Dendritic cell treated with granulocyte-macrophage colony-stimulating factor and Interleukin-4, amounts not matched to agents 40 ng/mL and 50 ng/mL, for 4 days (primary cell): ENCODE measurements at regions of chr17 and their contacts with region 1.

Region 1: GRCh38 chr17:39621523-39622379 is 5.0 kb upstream of the PPP1R1B start:
- H3K4me3 Mint-ChIP-seq: no peak overlapping the region
- H3K27ac Mint-ChIP-seq: no peak overlapping the region
- H3K4me1 Mint-ChIP-seq: peaks cover 32% of the 10 kb centered on the region
- H3K27me3 Mint-ChIP-seq: peaks cover 80% of the 10 kb centered on the region

Region 2: GRCh38 chr17:39527220-39527813 is 94.4 kb before region 1 on chr17:
- intact Hi-C with region 1: loop called (anchors 5 kb)
- H3K4me3 Mint-ChIP-seq: no peak overlapping the region
- H3K27ac Mint-ChIP-seq: no peak overlapping the region
- H3K4me1 Mint-ChIP-seq: peaks cover 17% of the 10 kb centered on the region
- H3K27me3 Mint-ChIP-seq: no peaks in the 10 kb centered on the region

Region 3: DNA sequence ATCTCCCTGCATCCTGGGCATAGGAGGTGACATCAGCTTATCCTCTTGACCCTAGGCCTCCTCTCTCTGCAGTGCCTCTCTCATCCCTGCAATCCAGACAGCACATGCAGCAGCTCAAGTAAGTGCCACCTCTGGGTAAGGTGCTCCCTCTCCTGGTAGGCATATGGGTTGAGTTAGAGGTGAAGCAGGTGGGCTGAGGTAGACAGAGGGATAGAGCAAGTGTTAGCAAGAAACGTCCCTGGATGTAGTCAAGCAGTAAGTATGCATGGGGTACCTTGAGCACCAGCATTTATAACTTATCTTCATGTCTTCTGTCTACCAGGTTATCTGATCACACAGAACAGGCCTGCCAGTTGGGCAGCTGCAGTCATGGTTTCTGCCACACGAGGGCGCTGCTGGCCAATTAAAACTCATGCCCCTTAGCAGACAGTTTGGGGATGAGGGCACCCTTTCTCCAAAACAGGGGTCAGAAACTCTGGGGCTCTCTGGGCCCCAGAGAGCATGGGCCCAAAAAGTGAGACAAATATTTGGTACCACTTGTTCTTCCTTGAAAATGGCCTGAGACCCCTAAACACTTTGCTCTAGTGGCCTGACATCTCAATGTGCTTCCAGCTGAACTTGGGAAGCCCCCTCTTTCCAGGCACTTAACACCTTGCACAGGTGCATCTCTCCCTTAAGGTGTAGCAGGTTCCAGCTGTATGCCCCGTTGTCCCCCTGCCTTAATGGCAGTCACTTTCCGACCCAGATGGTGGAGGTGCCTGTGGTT is 73.9 kb before region 1 on chr17:
- intact Hi-C with region 1: loop called (anchors 1 kb)
- H3K4me3 Mint-ChIP-seq: no peak overlapping the region
- H3K27ac Mint-ChIP-seq: no peak overlapping the region
- H3K4me1 Mint-ChIP-seq: peaks cover 32% of the 10 kb centered on the region
- H3K27me3 Mint-ChIP-seq: no peaks in the 10 kb centered on the region

Region 4: DNA sequence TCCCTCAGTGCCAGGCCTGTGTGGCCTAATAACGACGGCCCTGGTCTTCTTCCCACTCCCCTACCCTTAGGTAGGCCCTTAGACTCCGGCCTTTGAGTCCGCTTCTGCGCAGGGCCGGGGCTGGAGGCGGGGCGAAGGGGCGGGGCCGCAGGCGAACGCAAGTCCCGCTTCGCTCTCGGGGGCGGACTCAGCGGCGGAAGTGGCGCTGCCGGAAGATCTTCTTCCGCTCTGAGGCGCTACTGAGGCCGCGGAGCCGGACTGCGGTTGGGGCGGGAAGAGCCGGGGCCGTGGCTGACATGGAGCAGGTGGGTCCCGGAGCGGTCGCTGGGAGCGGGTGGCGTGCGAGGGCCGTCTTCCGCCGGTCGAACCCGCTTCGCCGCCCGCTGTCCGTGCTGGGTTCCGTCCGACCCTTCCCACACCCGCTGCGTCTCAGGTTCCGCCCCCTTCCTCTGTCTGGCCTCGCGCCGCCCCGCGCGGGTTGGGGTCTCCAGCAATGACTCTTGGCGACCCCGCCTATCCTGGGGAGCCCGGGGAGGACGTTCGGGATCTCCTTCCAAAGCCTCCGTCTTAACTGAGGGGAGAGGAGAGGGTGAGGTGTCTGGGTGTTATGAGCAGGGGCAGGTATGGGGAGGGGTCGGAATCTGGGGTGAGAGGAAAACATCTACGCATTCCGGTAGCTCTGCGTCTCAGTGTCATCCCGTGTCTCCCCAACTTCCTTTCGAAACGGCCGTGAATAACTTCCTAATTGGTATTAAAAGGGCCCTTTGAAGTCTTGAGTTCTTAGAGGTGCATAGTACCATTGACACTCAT is 15.4 kb after region 1 on chr17 and contains the start of gene STARD3:
- intact Hi-C with region 1: loop called (anchors 2 kb)
- H3K4me3 Mint-ChIP-seq: peak within 1 kb of the TSS; percentile 94
- H3K27ac Mint-ChIP-seq: peak within 1 kb of the TSS; percentile 79
- H3K4me1 Mint-ChIP-seq: peaks cover 85% of the 10 kb centered on the region
- H3K27me3 Mint-ChIP-seq: peaks cover 8% of the 10 kb centered on the region

Region 5: DNA sequence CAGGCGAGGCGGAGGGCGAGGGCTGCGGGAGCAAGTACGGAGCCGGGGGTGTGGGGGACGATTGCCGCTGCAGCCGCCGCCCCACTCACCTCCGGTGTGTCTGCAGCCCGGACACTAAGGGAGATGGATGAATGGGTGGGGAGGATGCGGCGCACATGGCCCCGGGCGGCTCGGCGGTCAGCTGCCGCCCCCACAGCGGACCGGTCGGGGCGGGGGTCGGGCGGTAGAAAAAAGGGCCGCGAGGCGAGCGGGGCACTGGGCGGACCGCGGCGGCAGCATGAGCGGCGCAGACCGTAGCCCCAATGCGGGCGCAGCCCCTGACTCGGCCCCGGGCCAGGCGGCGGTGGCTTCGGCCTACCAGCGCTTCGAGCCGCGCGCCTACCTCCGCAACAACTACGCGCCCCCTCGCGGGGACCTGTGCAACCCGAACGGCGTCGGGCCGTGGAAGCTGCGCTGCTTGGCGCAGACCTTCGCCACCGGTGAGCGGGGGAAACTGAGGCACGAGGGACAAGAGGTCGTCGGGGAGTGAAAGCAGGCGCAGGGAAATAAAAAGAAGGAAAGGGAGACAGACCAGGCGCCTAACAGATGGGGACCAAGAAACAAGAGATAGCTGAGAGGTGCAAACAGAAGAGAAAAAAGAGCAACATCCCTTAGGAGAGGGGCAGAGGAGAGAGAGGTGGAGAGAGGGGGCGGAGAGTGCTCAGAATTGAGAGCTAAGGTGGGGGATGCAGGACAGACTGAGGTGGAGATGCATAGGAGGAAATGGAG is 46.6 kb after region 1 on chr17 and contains the start of gene PNMT:
- intact Hi-C with region 1: loop called (anchors 1 kb)
- H3K4me3 Mint-ChIP-seq: peak within 1 kb of the TSS; percentile 8
- H3K27ac Mint-ChIP-seq: no peak within 1 kb of the TSS
- H3K4me1 Mint-ChIP-seq: peaks cover 37% of the 10 kb centered on the region
- H3K27me3 Mint-ChIP-seq: peaks cover 89% of the 10 kb centered on the region

Region 6: GRCh38 chr17:39730095-39730921 is 108.6 kb after region 1 on chr17 and contains the start of gene MIEN1:
- intact Hi-C with region 1: no loop called
- H3K4me3 Mint-ChIP-seq: peak within 1 kb of the TSS; percentile 83
- H3K27ac Mint-ChIP-seq: peak within 1 kb of the TSS; percentile 81
- H3K4me1 Mint-ChIP-seq: peaks cover 24% of the 10 kb centered on the region
- H3K27me3 Mint-ChIP-seq: peaks cover 19% of the 10 kb centered on the region

Region 7: DNA sequence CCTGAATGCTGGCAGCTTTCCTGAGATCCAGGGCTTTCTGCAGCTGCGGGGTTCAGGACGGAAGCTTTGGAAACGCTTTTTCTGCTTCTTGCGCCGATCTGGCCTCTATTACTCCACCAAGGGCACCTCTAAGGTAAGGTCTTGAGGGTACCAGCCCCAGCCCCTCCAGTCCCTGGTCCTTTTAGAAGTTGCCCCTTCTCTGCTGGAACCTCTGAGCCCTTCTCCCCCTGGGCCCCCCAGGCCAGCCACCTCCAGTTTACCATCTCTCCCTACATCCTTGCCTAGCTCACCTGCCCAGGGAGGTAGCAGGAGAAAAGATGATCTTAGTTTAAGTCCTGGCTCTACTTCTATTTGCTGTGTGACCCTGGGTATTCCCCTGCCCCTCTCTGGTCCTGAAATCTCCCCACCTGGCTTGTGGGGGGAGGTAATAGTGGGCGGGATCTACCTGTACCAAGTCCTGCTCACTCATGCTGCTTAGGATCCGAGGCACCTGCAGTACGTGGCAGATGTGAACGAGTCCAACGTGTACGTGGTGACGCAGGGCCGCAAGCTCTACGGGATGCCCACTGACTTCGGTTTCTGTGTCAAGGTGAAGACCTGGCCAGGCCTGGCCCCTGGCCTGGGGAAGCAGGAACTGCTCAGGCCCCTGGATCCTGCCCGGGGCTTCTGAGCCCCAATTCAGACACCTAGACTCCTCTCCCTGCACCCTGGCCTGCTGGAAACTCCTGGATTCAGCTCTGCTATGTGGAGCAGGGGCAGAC is 122.5 kb after region 1 on chr17:
- intact Hi-C with region 1: no loop called
- H3K4me3 Mint-ChIP-seq: no peak overlapping the region
- H3K27ac Mint-ChIP-seq: no peak overlapping the region
- H3K4me1 Mint-ChIP-seq: peaks cover 10% of the 10 kb centered on the region
- H3K27me3 Mint-ChIP-seq: peaks cover 67% of the 10 kb centered on the region

Region 8: DNA sequence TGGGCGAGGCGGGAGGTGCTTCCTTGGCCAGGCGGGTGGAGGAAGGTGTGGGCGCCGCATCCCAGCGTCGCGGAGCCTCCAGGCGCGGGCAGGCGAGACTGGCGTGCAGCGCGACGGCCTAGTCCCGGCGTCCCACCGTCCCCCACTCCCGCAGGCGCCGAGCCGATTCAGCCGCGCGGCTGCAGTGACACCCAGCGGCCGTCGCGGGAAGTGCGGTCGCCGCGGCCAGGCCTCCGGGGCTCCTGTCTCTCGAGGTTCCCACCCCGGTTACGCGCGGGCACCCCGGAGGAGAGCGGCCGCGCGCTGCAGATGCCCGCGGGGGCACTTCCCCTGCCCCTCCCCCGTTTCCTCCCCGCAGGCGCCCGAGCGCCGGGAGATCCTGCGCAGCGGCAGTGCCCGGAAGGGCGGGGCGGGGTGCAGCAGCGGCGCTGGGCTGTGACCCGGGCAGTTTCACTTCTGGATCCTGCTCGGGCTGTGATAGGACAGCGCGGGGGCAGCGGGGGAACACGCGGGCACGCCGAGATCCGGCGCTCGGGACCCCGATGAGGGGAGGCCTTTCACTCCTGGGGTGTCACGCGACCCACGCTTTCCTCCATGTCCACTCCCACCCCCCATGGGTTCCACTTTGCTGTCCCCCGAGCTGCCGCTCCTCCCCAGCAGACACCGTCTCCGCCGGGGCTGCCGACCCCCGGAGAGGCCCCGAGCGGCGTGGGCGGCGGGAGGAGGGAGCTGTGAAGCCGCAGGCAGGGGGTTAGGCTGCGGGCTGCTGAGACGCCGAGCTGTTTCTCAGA is 132.6 kb after region 1 on chr17:
- intact Hi-C with region 1: loop called (anchors 1 kb)
- H3K4me3 Mint-ChIP-seq: peak overlapping the region; percentile 71
- H3K27ac Mint-ChIP-seq: peak overlapping the region; percentile 90
- H3K4me1 Mint-ChIP-seq: peaks cover 55% of the 10 kb centered on the region
- H3K27me3 Mint-ChIP-seq: peaks cover 16% of the 10 kb centered on the region

Region 9: DNA sequence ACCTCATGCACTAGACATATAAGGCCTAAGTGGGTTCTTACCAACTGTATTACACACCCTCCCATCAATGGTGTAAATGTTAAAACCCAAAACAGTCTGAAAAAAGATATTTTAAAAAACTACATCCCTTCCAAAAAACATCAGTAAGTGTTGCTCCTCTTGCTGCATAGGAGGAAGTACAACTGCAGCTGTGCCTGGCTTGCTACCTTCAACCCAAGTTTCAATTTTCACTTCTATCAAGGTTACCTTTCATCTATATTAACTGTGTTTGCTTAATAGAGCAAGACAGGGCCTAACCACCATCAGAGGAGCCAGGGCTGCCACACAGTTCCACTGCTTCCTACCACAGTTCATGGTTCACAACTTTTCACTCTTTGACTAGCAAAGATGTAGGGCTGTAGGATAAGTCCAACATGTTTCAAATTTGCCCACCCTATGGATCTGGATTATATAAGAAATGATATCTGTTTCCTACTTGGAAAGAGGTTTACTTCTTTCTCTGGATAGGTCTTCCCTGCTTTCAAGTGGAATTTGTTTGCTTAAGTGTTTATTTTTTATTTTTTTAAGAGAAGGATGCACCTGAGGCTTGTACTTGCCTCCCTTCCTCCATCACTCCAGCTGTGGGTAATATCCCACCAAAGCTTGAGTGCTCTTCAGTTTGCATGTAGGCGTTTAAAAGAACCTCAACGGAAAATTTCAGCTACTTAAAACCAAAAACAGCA is 172.7 kb after region 1 on chr17:
- intact Hi-C with region 1: no loop called
- H3K4me3 Mint-ChIP-seq: no peak overlapping the region
- H3K27ac Mint-ChIP-seq: no peak overlapping the region
- H3K4me1 Mint-ChIP-seq: peaks cover 5% of the 10 kb centered on the region
- H3K27me3 Mint-ChIP-seq: peaks cover 57% of the 10 kb centered on the region